ENCODE measurements at regions of chr1 and their contacts with region 1.

Region 1: GRCh38 chr1:92858564-92859399 is 26.9 kb downstream of the RPL5 start:
- DNase-seq: peak in 2 of 4 donors; percentile 74 to 85
- ATAC-seq: peak; percentile 98
- H3K4me3 ChIP-seq: peak overlapping the region in 1 of 2 donors; percentile 8
- H3K27ac ChIP-seq: no peak overlapping the region
- H3K4me1 ChIP-seq: peaks cover 0 to 11% of the 10 kb centered on the region in 2 donors
- H3K27me3 ChIP-seq: no peaks in the 10 kb centered on the region
- CTCF ChIP-seq: peak; percentile 87 to 89

Region 2: GRCh38 chr1:92792340-92792782 is 66.4 kb before region 1 on chr1:
- intact Hi-C with region 1: no loop called
- DNase-seq: no peak
- ATAC-seq: peak; percentile 12
- H3K4me3 ChIP-seq: no peak overlapping the region
- H3K27ac ChIP-seq: no peak overlapping the region
- H3K4me1 ChIP-seq: peaks cover 0 to 3% of the 10 kb centered on the region in 2 donors
- H3K27me3 ChIP-seq: no peaks in the 10 kb centered on the region
- CTCF ChIP-seq: no peak

Region 3: GRCh38 chr1:92994105-92994712 is 135.4 kb after region 1 on chr1:
- intact Hi-C with region 1: loop called in 1 of 2 experiments (anchors 1 kb)
- DNase-seq: peak in 3 of 4 donors; percentile 49 to 91 (median 76)
- ATAC-seq: peak; percentile 83
- H3K4me3 ChIP-seq: no peak overlapping the region
- H3K27ac ChIP-seq: no peak overlapping the region
- H3K4me1 ChIP-seq: peaks cover 0 to 6% of the 10 kb centered on the region in 2 donors
- H3K27me3 ChIP-seq: no peaks in the 10 kb centered on the region
- CTCF ChIP-seq: peak; percentile 82 to 87